Mammary epithelial cell (primary cell): ENCODE measurements at regions of chr1 and their contacts with region 1.

Region 1: DNA sequence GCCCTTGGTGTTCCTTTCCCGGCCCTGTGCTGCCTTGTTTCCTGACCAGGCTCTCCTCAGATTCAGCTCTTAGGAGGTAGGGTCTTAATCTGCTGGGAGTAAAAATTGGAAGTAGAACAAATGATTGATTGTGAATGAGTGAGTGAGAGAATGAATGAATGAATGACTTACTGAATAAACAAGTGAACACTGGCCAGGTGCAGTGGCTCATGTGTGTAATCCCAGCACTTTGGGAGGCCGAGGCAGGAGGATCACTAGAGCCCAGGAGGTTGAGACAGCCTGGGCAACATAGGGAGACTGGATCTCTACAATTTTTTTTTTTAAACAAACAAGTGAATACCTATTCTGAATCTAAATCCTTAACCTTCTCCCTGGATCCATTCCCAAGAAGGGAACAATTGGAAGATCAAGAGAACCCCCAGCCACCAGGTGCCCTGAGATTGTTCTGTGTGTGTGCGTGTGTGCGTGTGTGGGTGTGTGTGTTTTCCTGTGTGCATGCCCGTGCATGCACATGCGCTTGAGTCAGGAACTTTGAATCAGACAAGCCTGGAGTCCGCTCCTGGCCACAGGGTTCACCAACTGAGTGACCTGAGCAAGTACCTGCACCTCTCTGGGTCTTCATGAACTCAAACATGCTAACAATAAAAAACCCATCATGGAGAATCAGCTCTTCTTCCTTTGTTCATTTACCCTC is 24.3 kb upstream of the CITED4 start:
- DNase-seq: peak; percentile 97
- H3K4me3 ChIP-seq: no peak overlapping the region
- H3K27ac ChIP-seq: peak overlapping the region; percentile 83
- H3K4me1 ChIP-seq: peaks cover 61% of the 10 kb centered on the region
- H3K27me3 ChIP-seq: no peaks in the 10 kb centered on the region
- CTCF ChIP-seq: no peak

Region 2: DNA sequence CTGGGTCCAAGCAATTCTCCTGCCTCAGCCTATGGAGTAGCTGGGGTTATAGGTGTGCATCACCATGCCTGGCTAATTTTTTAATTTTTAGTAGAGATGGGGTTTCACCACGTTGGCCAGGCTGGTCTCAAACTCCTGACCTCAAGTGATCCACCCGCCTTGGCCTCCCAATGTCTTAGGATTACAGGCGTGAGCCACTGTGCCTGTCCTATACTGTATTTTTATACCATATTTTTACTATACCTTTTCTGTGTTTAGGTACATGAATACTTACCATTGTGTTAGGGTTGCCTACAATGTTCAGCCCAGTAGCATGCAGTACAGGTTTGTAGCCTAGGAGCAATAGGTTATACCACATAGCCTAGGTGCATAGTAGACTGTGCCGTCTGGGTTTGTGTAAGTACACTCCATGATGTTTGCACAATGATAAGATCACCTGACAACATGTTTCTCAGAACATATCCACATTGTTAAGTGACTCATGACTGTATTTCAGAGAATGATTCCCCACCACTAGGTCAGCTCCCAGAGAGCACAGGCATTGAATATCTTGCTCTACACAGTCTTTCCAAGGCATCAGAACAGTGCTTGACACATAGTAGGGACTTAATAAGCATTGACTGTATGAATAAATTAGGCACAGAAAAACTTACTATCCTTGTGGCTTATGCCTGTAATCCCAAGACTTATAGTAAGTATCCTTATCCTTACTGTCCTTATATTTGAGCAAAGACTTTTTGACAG is 18.2 kb before region 1 on chr1:
- CTCF ChIA-PET with region 1: no interaction called
- dilution Hi-C with region 1: no loop called
- in situ Hi-C with region 1: no loop called
- intact Hi-C with region 1: loop called (anchors 1 kb)
- DNase-seq: peak; percentile 89
- H3K4me3 ChIP-seq: no peak overlapping the region
- H3K27ac ChIP-seq: peak overlapping the region; percentile 22
- H3K4me1 ChIP-seq: peaks cover 33% of the 10 kb centered on the region
- H3K27me3 ChIP-seq: no peaks in the 10 kb centered on the region
- CTCF ChIP-seq: no peak